Psoas muscle (tissue), 8 donors: ENCODE measurements at regions of chr2 and their contacts with region 1.

Region 1: GRCh38 chr2:232521959-232522622 is 1.9 kb downstream of the PRSS56 start:
- DNase-seq: peak; percentile 70 to 86
- ATAC-seq: peak; percentile 19 to 52 (median 32)
- H3K4me3 ChIP-seq: peak overlapping the region; percentile 81
- H3K27ac ChIP-seq: peak overlapping the region; percentile 41
- H3K4me1 ChIP-seq: peaks cover 33% of the 10 kb centered on the region
- H3K27me3 ChIP-seq: peaks cover 0 to 12% (median 0%) of the 10 kb centered on the region in 3 donors
- CTCF ChIP-seq: peak; percentile 95

Region 2: GRCh38 chr2:231925303-231926179 is 596.5 kb before region 1 on chr2:
- intact Hi-C with region 1: loop called (anchors 5 to 10 kb)
- DNase-seq: peak; percentile 86 to 93
- ATAC-seq: peak; percentile 92 to 98 (median 95)
- H3K4me3 ChIP-seq: peak overlapping the region; percentile 63
- H3K27ac ChIP-seq: no peak overlapping the region
- H3K4me1 ChIP-seq: peaks cover 22% of the 10 kb centered on the region
- H3K27me3 ChIP-seq: peaks cover 0 to 84% (median 13%) of the 10 kb centered on the region in 3 donors
- CTCF ChIP-seq: peak; percentile 94

Region 3: DNA sequence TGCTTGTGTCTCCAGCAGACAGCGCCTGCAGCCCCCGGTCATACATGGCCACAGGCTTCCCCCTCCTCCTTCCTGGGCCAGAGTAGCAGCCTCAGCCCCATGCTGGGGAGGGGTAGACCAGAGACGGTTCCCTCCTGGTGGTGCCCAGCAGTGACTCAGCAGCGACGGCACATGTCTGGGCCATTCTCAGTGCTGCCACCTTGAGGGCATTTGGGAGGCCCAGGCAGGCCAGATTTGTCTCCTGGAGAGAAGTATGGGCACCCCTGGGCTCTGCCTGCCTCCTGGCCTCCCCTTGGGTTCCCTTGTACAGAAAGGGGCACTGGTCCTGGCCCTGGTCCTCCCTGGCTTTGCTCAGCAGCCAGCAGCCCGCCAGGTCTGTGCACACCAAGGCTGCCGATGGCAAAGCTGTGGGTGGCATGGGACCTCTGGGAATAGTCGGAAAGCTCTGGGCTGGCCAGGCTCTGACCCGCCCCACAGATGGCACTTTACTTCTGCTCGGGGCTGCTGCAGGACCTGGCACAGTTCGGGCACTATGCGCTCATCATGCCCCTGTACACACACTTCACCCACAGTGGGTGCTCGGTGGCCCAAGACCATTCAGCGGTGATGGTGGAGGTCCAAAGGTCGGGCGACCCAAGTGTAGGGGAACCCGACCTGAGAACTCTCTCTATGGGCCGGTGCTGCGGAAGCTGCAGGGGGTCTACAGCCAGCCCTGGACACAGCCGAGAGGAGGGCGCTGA is 77.5 kb before region 1 on chr2:
- intact Hi-C with region 1: loop called (anchors 2 kb)
- DNase-seq: peak; percentile 50 to 68
- ATAC-seq: peak in 3 of 4 donors; percentile 48 to 56 (median 55)
- H3K4me3 ChIP-seq: no peak overlapping the region
- H3K27ac ChIP-seq: peak overlapping the region; percentile 30
- H3K4me1 ChIP-seq: peaks cover 7% of the 10 kb centered on the region
- H3K27me3 ChIP-seq: no peaks in the 10 kb centered on the region
- CTCF ChIP-seq: peak; percentile 40

Region 4: DNA sequence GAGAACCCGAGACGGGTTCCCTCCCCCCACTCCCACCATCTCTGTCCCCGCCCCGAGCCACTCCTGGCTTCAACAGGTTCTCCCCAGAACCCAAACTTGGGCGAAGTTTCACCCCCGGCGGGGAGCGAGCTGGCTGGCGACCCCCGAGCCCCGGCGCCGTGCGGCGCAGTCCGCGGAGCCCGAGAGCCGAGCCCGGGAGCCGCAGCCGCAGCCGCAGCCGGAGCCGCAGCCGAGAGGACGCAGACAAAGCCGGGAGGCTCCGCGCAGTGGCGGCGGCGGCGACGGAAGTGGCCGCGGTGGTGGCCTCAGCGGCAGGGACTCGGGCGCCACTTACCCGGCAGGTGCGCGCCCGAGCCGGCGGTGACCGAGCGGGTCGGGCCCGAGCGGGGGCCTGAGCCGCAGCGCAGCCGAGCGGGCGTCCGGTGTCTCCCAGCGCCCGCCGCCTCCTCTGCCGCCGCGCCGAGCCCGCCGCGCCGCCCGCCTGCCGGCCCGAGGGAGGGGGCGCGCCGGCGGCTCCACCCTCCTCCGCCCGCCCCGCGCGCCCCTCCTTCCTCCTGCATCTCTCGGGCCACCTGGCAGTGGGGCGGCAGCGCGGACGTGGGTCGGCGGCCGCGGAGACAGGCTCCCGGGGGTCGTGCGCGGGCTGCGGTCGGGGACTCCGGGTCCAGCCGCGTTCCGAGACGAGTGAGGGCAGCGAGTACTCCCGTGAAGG is 34.5 kb before region 1 on chr2 and contains the start of gene ECEL1:
- intact Hi-C with region 1: loop called in 1 of 2 experiments (anchors 2 kb)
- DNase-seq: peak in 1 of 2 donors; percentile 44
- ATAC-seq: peak in 2 of 4 donors; percentile 49 to 59
- H3K4me3 ChIP-seq: peak within 1 kb of the TSS; percentile 47
- H3K27ac ChIP-seq: no peak within 1 kb of the TSS
- H3K4me1 ChIP-seq: no peaks in the 10 kb centered on the region
- H3K27me3 ChIP-seq: peaks cover 0 to 59% (median 23%) of the 10 kb centered on the region in 3 donors
- CTCF ChIP-seq: no peak
- total RNA-seq, gene ECEL1: 0.32 to 1.0 (median 0.61) TPM

Region 5: DNA sequence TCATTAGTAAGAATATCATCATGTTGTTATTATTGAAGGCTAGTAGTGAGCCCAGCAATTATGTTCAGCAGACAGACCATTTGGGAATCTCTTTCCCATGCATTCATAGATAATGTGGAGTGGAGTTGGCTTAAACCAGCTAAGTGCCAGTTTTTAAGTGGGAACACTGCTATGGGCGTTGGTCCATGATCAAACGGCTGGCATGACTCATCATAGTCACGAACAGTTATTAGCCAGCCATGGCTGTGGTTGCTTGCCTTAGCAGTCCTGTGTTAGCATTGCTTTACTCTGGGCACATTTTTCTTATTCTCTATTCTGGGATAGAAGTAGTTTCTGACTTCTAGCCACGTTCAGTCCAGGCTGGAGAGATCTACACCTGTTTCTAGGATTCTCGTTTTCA is 46.1 kb after region 1 on chr2:
- intact Hi-C with region 1: loop called in 1 of 2 experiments (anchors 2 kb)
- DNase-seq: peak in 1 of 2 donors; percentile 57
- ATAC-seq: peak; percentile 64 to 80 (median 76)
- H3K4me3 ChIP-seq: no peak overlapping the region
- H3K27ac ChIP-seq: peak overlapping the region; percentile 92
- H3K4me1 ChIP-seq: peaks cover 45% of the 10 kb centered on the region
- H3K27me3 ChIP-seq: no peaks in the 10 kb centered on the region
- CTCF ChIP-seq: no peak

Region 6: DNA sequence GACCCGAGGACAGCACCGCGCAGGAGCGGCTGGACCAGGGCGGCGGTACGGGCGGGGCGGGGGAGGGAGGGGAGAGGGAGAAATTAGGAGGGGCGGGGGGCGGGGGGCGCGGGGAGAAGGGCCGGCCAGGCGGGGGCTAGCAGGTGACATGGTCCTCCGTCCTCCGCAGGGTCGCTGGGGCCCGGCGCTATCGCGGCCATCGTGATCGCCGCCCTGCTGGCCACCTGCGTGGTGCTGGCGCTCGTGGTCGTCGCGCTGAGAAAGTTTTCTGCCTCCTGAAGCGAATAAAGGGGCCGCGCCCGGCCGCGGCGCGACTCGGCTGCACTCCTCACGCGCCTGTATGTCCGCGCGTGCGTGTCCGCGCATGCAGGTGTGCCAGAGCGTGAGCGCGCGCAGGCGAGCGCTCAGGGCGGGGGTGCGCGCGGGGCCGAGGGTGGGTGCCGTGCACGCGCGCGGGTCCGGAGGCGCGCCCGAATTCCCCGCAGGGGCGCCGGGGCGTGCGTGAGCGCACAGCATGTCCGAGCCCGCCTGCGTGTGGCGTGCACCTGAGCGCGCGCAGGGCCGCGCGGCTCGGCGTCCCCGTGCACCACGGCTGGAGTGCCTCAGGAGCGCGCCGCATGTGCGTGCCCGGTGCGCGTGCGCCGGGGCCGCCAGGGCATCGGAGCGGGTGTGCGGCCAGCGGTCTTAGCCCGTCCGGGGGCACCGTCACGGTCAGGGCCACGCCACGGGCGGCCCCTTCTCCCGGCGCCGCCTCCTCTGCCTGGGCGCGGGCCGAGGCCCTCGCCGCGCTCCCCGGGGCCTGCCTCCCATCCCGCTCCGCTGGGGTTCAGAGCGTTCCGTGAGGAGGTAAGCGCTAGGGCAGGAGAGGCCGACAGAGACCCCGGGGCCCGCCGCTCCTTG is 354.2 kb after region 1 on chr2:
- intact Hi-C with region 1: no loop called
- DNase-seq: peak in 1 of 2 donors; percentile 58
- ATAC-seq: peak; percentile 43 to 79 (median 62)
- H3K4me3 ChIP-seq: peak overlapping the region; percentile 71
- H3K27ac ChIP-seq: no peak overlapping the region
- H3K4me1 ChIP-seq: no peaks in the 10 kb centered on the region
- H3K27me3 ChIP-seq: no peaks in the 10 kb centered on the region
- CTCF ChIP-seq: peak; percentile 23